ENCODE measurements at regions of chr17 and their contacts with region 1.

Region 1: GRCh38 chr17:38557836-38558727 is 47.7 kb downstream of the SRCIN1 start:
- DNase-seq: peak; percentile 67 to 93
- H3K4me3 ChIP-seq: peak overlapping the region; percentile 35 to 58
- H3K27ac ChIP-seq: no peak overlapping the region
- H3K4me1 ChIP-seq: peaks cover 7 to 14% of the 10 kb centered on the region in 2 donors
- H3K27me3 ChIP-seq: peaks cover 39% of the 10 kb centered on the region
- CTCF ChIP-seq: peak; percentile 86 to 92 (median 90)

Region 2: DNA sequence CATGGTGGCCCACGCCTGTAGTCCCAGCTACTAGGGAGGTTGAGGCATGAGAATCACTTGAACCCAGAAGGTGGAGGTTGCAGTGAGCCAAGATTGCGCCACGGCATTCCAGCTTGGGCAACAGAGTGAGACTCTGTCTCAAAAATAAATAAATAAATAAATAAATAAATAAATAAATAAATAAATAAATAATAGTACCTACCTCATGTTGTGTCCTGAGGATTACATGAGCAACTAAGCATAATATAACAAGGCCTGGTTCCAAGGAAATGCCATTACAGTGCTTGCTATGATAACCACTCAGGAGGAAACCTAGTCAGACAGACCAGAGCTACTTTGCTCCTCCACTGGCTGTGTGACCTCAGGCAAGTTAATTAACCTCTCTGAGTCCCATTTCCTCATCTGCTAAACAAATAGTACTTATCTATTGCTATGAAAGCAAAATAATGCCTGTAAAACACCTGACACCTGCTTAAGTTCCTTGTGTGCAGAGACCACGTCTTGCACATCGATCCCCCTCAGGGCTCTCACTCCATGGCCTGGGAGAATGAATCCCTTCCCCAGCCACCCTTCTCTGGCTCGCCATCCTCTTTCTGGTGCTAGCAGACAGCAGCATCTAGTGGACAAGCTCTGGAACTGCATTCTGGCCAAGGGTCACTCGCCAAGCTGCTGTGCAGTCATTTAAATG is 109.2 kb after region 1 on chr17:
- intact Hi-C with region 1: loop called (anchors 1 kb)
- DNase-seq: peak in 1 of 2 donors; percentile 81
- H3K4me3 ChIP-seq: no peak overlapping the region
- H3K27ac ChIP-seq: no peak overlapping the region
- H3K4me1 ChIP-seq: no peaks in the 10 kb centered on the region
- H3K27me3 ChIP-seq: no peaks in the 10 kb centered on the region
- CTCF ChIP-seq: peak; percentile 93 to 99 (median 98)

Region 3: DNA sequence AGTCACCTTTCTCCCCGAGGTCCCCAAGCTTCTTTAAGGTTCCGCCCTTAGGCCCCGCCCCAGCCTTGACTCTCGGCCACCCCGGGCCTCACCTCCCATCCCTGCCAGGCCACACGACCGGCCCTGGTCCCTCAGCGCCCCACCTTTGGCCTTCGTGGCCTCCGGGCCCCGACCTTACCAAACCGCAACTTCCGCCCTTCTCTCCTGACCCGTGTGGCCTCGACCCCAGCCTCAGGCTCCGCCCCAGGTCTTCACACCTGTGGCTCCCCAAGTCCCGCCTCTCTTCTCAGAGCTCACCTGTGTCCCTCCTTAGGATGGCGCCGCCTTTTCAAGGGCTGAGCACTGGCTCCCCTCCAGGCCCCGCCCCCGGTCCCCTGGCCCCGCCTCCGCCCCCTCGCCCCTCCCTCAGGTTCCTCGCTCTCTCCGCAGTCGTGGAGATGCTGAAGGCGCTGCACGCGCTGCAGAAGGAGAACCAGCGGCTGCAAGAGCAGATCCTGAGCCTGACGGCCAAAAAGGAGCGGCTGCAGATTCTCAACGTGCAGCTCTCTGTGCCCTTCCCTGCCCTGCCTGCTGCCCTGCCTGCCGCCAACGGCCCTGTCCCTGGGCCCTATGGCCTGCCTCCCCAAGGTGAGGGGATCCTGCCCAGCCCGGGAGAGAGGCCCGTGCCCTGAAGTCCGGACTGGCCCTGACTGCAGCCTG is 162.0 kb after region 1 on chr17:
- intact Hi-C with region 1: no loop called
- DNase-seq: no peak
- H3K4me3 ChIP-seq: no peak overlapping the region
- H3K27ac ChIP-seq: no peak overlapping the region
- H3K4me1 ChIP-seq: no peaks in the 10 kb centered on the region
- H3K27me3 ChIP-seq: no peaks in the 10 kb centered on the region
- CTCF ChIP-seq: no peak